Heart left ventricle (tissue), 16 donors: ENCODE measurements at regions of chr7 and their contacts with region 1.

Region 1: GRCh38 chr7:69457595-69458504 is 140.4 kb upstream of the AUTS2 start:
- DNase-seq: peak; percentile 78 to 85 (median 83)
- ATAC-seq: peak; percentile 93 to 97 (median 95)
- H3K4me3 ChIP-seq: no peak overlapping the region
- H3K27ac ChIP-seq: peak overlapping the region in 9 of 12 donors; percentile 25 to 60 (median 39)
- H3K4me1 ChIP-seq: peaks cover 0 to 18% (median 8%) of the 10 kb centered on the region in 12 donors
- H3K27me3 ChIP-seq: no peaks in the 10 kb centered on the region
- CTCF ChIP-seq: no peak
- POLR2A ChIP-seq: no peak

Region 2: DNA sequence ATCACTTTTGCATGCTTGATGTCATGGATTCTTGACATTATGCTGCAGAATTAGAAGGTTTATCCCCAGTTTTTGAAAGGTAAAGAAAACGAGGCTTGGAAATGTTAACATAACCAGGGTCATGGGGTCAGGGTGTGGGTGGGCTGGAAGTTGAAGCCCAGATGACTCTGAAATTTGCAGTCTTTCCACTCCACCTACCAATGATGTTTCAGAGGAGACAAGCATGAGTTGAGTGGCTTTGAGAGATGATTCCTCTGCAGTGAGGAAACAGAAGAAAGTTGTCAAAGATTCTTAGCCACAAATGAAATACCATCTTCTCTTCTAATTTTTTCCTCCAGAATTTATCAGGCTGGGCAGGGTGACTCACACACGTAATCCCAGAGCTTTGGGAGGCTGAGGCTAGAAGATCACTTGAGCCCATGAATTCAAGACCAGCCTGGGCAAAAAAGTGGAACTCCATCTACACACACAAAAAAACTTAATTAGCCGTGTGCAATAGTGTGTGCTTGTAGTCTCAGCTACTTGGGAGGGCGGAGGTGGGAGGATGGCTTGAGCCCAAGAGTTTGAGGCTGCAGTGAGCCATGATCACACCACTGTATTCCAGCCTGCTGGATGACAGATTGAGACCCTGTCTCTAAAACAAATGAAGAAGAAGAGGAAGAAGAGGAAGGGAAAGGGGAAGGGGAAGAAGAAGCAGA is 98.7 kb before region 1 on chr7:
- intact Hi-C with region 1: no loop called
- DNase-seq: no peak
- ATAC-seq: peak in 3 of 4 donors; percentile 22 to 45 (median 43)
- H3K4me3 ChIP-seq: no peak overlapping the region
- H3K27ac ChIP-seq: no peak overlapping the region
- H3K4me1 ChIP-seq: peaks cover 0 to 3% (median 0%) of the 10 kb centered on the region in 12 donors
- H3K27me3 ChIP-seq: no peaks in the 10 kb centered on the region
- CTCF ChIP-seq: no peak
- POLR2A ChIP-seq: no peak

Region 3: DNA sequence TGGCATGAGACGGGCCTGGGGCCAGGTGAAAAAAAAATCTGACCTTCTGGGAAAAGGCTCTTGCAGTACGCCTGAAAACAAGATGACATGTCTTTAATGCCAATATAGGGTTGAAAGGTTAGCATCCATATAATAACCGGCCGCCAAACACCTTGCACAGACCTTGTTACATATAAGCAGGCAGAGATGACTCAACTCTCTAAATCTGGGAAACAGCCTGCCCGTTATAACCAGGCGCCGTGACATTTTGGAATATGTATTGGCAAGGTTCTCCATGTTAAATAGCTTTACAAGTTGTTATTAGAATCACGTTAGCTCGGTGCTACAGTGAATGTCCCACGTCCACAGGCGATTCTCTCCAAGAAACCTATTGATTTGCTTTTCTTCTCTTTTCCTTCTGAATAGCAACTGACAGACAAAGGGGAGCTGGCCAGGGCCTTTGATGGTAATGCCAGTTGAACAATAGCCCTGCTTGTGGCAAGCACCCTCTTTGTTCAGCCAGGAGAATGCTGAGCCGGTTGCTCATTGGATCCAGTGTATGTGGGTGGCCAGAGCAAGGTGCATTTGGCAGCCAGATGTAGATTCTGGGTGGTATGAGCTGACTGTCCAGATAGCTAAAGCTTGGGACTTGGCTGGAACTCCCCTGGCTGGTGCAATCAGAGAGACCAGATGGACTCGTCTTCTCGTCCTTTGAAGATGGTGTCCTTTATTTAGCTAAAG is 60.3 kb after region 1 on chr7:
- intact Hi-C with region 1: loop called in 2 of 10 experiments (anchors 1 to 5 kb)
- DNase-seq: no peak
- ATAC-seq: no peak
- H3K4me3 ChIP-seq: no peak overlapping the region
- H3K27ac ChIP-seq: no peak overlapping the region
- H3K4me1 ChIP-seq: peaks cover 0 to 11% (median 2%) of the 10 kb centered on the region in 12 donors
- H3K27me3 ChIP-seq: no peaks in the 10 kb centered on the region
- CTCF ChIP-seq: no peak
- POLR2A ChIP-seq: no peak